ENCODE measurements at regions of chr3 and their contacts with region 1.

Region 1: DNA sequence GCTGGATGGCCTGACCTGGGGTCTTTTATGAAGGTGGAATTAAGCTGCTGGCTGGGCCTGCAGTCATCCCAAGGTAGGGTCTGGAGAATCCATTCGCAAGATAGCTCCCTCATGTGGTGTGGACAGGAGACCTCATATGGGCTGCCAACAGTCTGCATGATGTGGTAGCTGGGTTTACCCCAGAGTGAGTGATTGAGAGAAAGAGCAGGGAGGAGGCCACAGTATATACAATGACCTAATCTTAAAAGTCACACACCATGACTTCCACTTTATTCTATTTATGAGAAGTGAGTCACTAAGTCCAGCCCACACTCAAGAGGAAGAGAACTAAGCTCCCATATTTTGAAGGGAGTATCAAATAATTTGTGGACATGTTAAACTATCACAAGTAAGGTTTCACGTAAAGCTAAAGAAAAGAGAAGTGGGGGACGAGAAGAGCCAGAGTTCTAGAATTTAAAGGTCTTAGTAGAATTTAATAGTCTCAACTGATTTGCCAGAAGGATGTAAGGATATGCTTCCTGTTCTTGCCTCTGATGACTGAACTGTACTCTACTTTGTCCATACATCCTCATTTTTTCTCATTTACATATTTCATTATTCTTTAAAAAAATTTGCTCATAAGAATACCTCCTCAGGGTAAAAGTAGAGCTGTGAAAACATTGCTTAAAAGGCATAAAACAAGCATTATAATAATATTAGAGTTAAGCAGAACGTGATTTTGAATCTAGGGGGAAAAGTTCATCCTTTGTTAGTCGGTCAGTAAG is 184.4 kb downstream of the PEX5L start:
- DNase-seq: peak; percentile 23
- ATAC-seq: peak; percentile 100
- H3K4me3 Mint-ChIP-seq: no peak overlapping the region
- H3K27ac Mint-ChIP-seq: no peak overlapping the region
- H3K4me1 Mint-ChIP-seq: no peaks in the 10 kb centered on the region
- H3K27me3 Mint-ChIP-seq: no peaks in the 10 kb centered on the region
- CTCF ChIP-seq: no peak

Region 2: DNA sequence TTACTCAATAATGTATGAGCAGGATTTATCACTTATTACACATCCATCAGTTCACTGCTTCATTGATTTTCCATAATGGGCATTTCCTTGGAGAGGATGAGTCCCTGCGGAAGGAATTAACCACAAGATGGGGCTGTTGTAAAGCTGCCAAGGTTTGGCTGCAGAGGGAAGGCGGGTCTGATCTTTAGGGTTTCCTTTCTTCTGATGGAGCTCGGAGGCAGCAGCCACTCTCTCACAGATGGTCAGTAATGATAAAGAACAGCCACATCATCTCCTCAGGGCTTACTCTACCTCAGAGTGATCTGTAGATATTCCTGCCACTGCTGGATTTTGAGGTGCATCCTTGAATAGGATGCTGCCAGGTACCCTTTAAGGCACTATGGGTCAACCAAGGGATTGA is 84.2 kb before region 1 on chr3:
- CTCF ChIA-PET with region 1: interaction called, 10 read pairs
- POLR2A ChIA-PET with region 1: no interaction called
- DNase-seq: peak; percentile 53
- ATAC-seq: peak; percentile 84
- H3K4me3 Mint-ChIP-seq: no peak overlapping the region
- H3K27ac Mint-ChIP-seq: 0 out of 2 replicates have a peak overlapping the region, but pooled peaks have one; percentile 21
- H3K4me1 Mint-ChIP-seq: peaks cover 28% of the 10 kb centered on the region
- H3K27me3 Mint-ChIP-seq: no peaks in the 10 kb centered on the region
- CTCF ChIP-seq: peak; percentile 53

Region 3: GRCh38 chr3:179801263-179801662 is 51.1 kb before region 1 on chr3:
- CTCF ChIA-PET with region 1: no interaction called
- POLR2A ChIA-PET with region 1: no interaction called
- DNase-seq: no peak
- ATAC-seq: no peak
- H3K4me3 Mint-ChIP-seq: no peak overlapping the region
- H3K27ac Mint-ChIP-seq: no peak overlapping the region
- H3K4me1 Mint-ChIP-seq: no peaks in the 10 kb centered on the region
- H3K27me3 Mint-ChIP-seq: no peaks in the 10 kb centered on the region
- CTCF ChIP-seq: no peak

Region 4: GRCh38 chr3:179811321-179812095 is 40.8 kb before region 1 on chr3:
- CTCF ChIA-PET with region 1: interaction called, 24 read pairs
- POLR2A ChIA-PET with region 1: no interaction called
- DNase-seq: peak; percentile 44
- ATAC-seq: peak; percentile 95
- H3K4me3 Mint-ChIP-seq: no peak overlapping the region
- H3K27ac Mint-ChIP-seq: no peak overlapping the region
- H3K4me1 Mint-ChIP-seq: peaks cover 4% of the 10 kb centered on the region
- H3K27me3 Mint-ChIP-seq: no peaks in the 10 kb centered on the region
- CTCF ChIP-seq: peak; percentile 59; the same call in 1 of the 2 replicates

Region 5: GRCh38 chr3:179872842-179873241 is 20.5 kb after region 1 on chr3:
- CTCF ChIA-PET with region 1: interaction called, 15 read pairs
- POLR2A ChIA-PET with region 1: no interaction called
- DNase-seq: peak; percentile 42
- ATAC-seq: peak; percentile 93
- H3K4me3 Mint-ChIP-seq: no peak overlapping the region
- H3K27ac Mint-ChIP-seq: no peak overlapping the region
- H3K4me1 Mint-ChIP-seq: peaks cover 22% of the 10 kb centered on the region
- H3K27me3 Mint-ChIP-seq: no peaks in the 10 kb centered on the region
- CTCF ChIP-seq: no peak

Region 6: DNA sequence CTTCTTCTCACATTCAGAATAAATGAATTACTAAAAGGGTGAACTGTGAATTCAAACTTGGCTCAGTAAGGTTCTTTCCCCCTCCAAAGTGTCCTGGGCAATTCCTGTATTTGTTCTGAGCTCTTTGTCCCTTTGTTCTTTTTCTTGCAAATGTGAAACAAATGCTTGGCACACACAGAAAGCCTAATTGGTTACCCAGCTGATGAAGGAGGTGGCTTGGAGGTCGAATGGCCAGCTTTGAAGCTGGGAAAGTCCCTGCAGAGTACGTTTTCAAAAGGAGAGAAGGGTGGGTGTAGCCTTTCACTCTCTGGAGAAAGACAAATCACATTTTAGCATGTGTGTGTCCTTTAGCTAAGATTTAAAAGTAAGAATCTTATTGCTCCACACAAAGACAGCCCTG is 30.0 kb after region 1 on chr3:
- CTCF ChIA-PET with region 1: interaction called, 10 read pairs
- POLR2A ChIA-PET with region 1: no interaction called
- DNase-seq: peak; percentile 21
- ATAC-seq: peak; percentile 88
- H3K4me3 Mint-ChIP-seq: no peak overlapping the region
- H3K27ac Mint-ChIP-seq: peak overlapping the region; percentile 64; the same call in 1 of the 2 replicates
- H3K4me1 Mint-ChIP-seq: peaks cover 47% of the 10 kb centered on the region
- H3K27me3 Mint-ChIP-seq: no peaks in the 10 kb centered on the region
- CTCF ChIP-seq: no peak